CD8-positive, alpha-beta memory T cell (primary cell): ENCODE measurements at regions of chr13 and their contacts with region 1.

Region 1: GRCh38 chr13:40069173-40070044 is 413.9 kb downstream of the COG6 start:
- DNase-seq: peak; percentile 54 to 80 (median 62)
- H3K4me3 ChIP-seq: no peak overlapping the region
- H3K4me3 Mint-ChIP-seq: no peak overlapping the region
- H3K27ac ChIP-seq: no peak overlapping the region
- H3K27ac Mint-ChIP-seq: peak overlapping the region in 1 of 8 donors; percentile 52
- H3K4me1 ChIP-seq: peaks cover 12% of the 10 kb centered on the region
- H3K4me1 Mint-ChIP-seq: peaks cover 10 to 19% (median 18%) of the 10 kb centered on the region in 3 donors
- H3K27me3 ChIP-seq: no peaks in the 10 kb centered on the region
- H3K27me3 Mint-ChIP-seq: peaks cover 0 to 4% of the 10 kb centered on the region in 2 donors

Region 2: DNA sequence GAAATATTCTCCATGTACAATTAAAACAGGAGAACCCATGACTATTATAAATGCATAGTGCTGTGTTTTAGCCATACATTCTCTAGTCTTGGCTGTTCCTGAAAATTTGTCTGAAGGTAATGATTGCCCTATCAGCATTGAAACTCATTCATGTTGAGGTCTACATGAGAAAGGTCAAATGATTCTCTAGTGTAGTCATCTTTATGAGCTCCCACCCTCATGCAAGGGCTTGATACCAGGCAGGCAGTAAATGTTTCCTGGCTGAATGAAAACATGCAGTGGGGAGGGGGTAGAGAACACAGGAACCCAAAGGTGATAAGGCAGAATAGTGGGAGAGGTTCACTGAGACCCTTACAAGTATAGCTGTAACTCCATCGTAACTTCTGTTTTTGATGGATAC is 10.3 kb after region 1 on chr13:
- CTCF ChIA-PET with region 1: interaction called, 13 read pairs
- POLR2A ChIA-PET with region 1: no interaction called
- DNase-seq: no peak
- H3K4me3 ChIP-seq: no peak overlapping the region
- H3K4me3 Mint-ChIP-seq: no peak overlapping the region
- H3K27ac ChIP-seq: no peak overlapping the region
- H3K27ac Mint-ChIP-seq: no peak overlapping the region
- H3K4me1 ChIP-seq: no peaks in the 10 kb centered on the region
- H3K4me1 Mint-ChIP-seq: peaks cover 3 to 4% (median 4%) of the 10 kb centered on the region in 3 donors
- H3K27me3 ChIP-seq: no peaks in the 10 kb centered on the region
- H3K27me3 Mint-ChIP-seq: peaks cover 0 to 1% of the 10 kb centered on the region in 2 donors

Region 3: GRCh38 chr13:40152145-40152544 is 82.7 kb after region 1 on chr13:
- CTCF ChIA-PET with region 1: no interaction called
- POLR2A ChIA-PET with region 1: no interaction called
- DNase-seq: no peak
- H3K4me3 ChIP-seq: no peak overlapping the region
- H3K4me3 Mint-ChIP-seq: no peak overlapping the region
- H3K27ac ChIP-seq: no peak overlapping the region
- H3K27ac Mint-ChIP-seq: peak overlapping the region in 2 of 8 donors; percentile 39 to 63
- H3K4me1 ChIP-seq: peaks cover 17% of the 10 kb centered on the region
- H3K4me1 Mint-ChIP-seq: peaks cover 20 to 32% (median 30%) of the 10 kb centered on the region in 3 donors
- H3K27me3 ChIP-seq: no peaks in the 10 kb centered on the region
- H3K27me3 Mint-ChIP-seq: no peaks in the 10 kb centered on the region

Region 4: DNA sequence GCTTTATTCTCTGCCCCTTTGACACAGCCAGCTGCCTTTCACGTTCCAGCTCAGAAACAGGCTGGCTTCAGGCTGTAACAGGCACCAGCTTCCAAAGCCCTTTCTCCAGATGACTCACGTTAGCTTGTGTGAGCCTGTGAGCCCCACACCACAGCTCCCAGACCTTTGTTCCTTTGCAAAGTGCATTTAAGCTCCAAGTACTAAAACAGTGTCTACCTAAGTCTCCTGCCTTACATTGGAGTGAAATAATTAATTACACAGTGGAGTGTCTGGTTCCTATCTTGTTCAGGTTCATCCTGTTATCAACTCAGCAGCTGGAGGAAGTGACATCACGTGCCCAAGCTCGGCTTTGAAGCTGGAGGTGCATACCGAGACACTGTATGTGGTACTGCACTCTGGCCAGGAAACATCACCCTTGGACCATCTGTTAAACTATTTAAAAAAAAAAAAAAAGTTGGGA is 121.3 kb after region 1 on chr13:
- CTCF ChIA-PET with region 1: interaction called, 10 read pairs
- POLR2A ChIA-PET with region 1: no interaction called
- DNase-seq: peak; percentile 27 to 82 (median 63)
- H3K4me3 ChIP-seq: peak overlapping the region; percentile 20
- H3K4me3 Mint-ChIP-seq: peak overlapping the region; percentile 28 to 88 (median 68)
- H3K27ac ChIP-seq: no peak overlapping the region
- H3K27ac Mint-ChIP-seq: peak overlapping the region; percentile 66 to 96 (median 88)
- H3K4me1 ChIP-seq: peaks cover 67% of the 10 kb centered on the region
- H3K4me1 Mint-ChIP-seq: peaks cover 61 to 78% (median 76%) of the 10 kb centered on the region in 3 donors
- H3K27me3 ChIP-seq: no peaks in the 10 kb centered on the region
- H3K27me3 Mint-ChIP-seq: no peaks in the 10 kb centered on the region